Activated CD4-positive, alpha-beta memory T cell treated with anti-CD3 and anti-CD28 coated beads for 36 hours (primary cell): ENCODE measurements at regions of chr1 and their contacts with region 1.

Region 1: DNA sequence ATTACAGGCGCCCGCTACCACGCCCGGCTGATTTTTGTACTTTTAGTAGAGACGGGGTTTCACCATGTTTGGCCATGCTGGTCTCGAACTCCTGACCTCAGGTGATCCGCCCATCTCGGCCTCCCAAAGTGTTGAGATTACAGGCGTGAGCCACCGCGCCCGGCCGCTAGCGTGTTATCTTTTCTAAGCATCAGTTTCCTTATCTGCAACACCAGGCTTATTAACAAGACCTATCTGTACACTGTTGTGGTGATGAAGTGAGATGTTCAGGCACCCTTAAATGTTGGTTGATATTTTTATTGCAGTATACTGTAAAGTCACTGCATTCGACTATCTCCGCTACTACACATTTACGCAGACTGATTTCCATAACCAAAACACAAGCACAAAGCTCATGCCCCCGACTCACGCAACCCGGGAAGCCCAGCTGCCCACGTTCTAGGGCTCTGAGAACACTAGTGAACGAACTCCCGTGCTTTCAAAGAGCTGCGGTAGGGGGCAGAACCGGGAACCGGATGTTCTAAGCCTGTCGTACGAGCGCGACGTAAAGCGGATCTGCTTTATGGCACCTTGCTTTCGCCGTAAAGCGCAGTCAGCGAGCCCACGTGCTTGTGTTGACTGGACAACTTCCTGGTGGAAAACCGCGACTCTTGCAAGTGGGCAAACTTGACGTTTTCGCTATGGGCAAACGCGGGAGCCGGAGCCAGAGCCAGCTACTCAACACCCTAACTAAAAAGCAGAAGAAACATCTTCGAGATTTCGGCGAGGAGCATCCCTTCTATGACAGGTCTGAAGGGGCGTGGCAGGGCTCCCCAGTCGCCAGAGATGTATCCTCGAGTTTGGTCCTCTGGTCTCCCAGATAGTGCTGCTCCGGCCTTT is at the start of gene UTP25:
- DNase-seq: peak; percentile 97
- H3K4me3 Mint-ChIP-seq: peak within 1 kb of the TSS; percentile 93
- H3K27ac Mint-ChIP-seq: peak within 1 kb of the TSS; percentile 88
- H3K4me1 Mint-ChIP-seq: peaks cover 42% of the 10 kb centered on the region
- H3K27me3 Mint-ChIP-seq: peaks cover 4% of the 10 kb centered on the region
- total RNA-seq, gene UTP25: 6.6 to 7.1 TPM

Region 2: DNA sequence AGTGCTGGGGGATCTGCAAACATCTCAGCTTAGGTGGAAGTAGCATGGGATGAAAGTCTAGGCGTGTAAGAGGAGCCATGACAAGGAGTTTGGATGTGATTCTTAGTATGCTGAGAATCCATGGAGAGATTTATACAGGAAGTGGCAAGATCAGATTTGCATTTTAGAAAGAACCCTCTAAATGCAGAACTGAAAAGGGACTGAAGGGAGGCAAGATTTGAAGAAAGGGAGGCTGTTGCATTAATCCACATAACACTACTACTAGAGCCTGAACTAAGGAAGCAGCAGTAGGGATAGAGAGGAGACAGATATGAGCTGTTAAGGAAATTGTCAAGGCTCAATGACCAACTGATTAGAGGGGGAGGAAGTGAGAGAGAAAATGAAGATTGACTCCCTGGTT is 53.0 kb before region 1 on chr1:
- CTCF ChIA-PET with region 1: interaction called, 32 read pairs
- POLR2A ChIA-PET with region 1: interaction called, 4 read pairs
- intact Hi-C with region 1: no loop called
- DNase-seq: no peak
- H3K4me3 Mint-ChIP-seq: no peak overlapping the region
- H3K27ac Mint-ChIP-seq: peak overlapping the region; percentile 81
- H3K4me1 Mint-ChIP-seq: peaks cover 35% of the 10 kb centered on the region
- H3K27me3 Mint-ChIP-seq: no peaks in the 10 kb centered on the region

Region 3: DNA sequence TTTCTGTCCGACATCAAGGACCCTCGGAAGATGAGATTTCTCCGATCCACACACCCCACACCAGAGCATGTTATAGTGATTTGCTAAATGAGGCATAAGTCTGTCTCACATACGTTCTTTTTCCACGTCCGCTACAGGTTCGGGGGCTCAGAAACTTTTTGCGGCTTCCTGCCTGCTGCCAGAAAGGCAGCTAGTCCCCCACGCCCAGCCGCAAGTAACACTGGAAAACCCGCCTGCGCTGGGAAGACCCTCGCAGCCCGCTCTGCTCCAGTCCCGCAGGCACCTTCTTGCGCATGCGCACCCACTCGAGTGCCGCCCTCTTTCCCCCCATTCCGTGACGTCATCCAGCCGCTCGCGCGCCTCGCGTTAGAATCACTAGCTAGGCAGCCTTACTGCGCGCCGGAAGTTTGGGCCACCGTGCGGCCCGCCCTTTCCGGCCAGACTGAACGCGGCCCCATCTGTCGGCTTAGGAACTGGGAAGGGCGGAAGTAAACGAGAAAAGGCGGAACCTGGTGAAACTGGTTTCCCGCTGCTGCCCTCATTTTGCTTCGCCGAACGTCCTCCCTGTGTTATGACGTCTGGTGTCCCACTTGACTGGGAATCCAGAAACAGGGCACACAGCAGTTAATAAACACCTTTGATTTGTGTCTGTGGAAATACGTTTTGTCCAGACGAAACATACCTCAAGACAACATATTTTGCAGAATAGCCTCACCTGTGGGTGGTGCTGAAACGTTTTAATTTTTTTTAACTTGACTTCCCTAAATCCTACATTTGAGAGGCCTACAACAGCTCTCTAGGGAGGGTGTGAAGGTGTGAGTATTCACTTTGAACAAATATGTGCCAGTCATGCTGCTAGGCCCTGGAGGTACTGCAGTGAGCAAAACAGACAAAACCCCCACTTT is 43.1 kb before region 1 on chr1 and contains the start of gene C1orf74:
- CTCF ChIA-PET with region 1: interaction called, 51 read pairs
- POLR2A ChIA-PET with region 1: interaction called, 3 read pairs
- intact Hi-C with region 1: loop called (anchors 1 kb)
- DNase-seq: peak; percentile 100
- H3K4me3 Mint-ChIP-seq: peak within 1 kb of the TSS; percentile 93
- H3K27ac Mint-ChIP-seq: peak within 1 kb of the TSS; percentile 93
- H3K4me1 Mint-ChIP-seq: peaks cover 39% of the 10 kb centered on the region
- H3K27me3 Mint-ChIP-seq: peaks cover 3% of the 10 kb centered on the region
- total RNA-seq, gene C1orf74: 3.5 to 3.9 TPM

Region 4: GRCh38 chr1:209805875-209806760 is 21.5 kb before region 1 on chr1 and contains the start of gene IRF6:
- CTCF ChIA-PET with region 1: interaction called, 52 read pairs
- POLR2A ChIA-PET with region 1: interaction called, 3 read pairs
- intact Hi-C with region 1: no loop called
- DNase-seq: peak; percentile 73
- H3K4me3 Mint-ChIP-seq: peak within 1 kb of the TSS; percentile 75
- H3K27ac Mint-ChIP-seq: peak within 1 kb of the TSS; percentile 55
- H3K4me1 Mint-ChIP-seq: peaks cover 9% of the 10 kb centered on the region
- H3K27me3 Mint-ChIP-seq: peaks cover 5% of the 10 kb centered on the region
- total RNA-seq, gene IRF6: 0.07 to 0.31 TPM

Region 5: DNA sequence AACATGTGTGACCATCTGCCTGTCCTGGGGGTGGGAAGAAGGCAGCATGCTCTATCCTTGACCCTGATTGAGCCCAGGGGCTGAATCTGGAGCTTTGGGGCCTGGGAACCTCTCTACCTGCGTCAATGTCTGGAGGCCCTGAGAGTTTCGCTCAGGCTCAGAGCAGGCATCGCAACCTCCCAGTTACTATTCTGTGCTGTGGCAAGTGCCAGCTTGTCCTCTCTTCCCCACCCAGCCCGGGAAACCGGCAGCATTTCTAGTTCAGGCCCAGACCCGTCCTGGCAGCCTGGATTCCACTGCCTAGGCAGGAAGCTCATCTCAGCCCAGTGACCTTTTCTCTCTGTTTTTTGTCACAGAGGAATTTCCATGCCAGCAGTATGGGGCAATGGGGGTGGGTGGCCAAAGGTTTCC is 11.7 kb before region 1 on chr1:
- CTCF ChIA-PET with region 1: interaction called, 52 read pairs
- POLR2A ChIA-PET with region 1: interaction called, 3 read pairs
- intact Hi-C with region 1: no loop called
- DNase-seq: no peak
- H3K4me3 Mint-ChIP-seq: no peak overlapping the region
- H3K27ac Mint-ChIP-seq: peak overlapping the region; percentile 44
- H3K4me1 Mint-ChIP-seq: peaks cover 8% of the 10 kb centered on the region
- H3K27me3 Mint-ChIP-seq: peaks cover 5% of the 10 kb centered on the region

Region 6: GRCh38 chr1:209839875-209840491 is 12.4 kb after region 1 on chr1:
- CTCF ChIA-PET with region 1: interaction called, 19 read pairs
- POLR2A ChIA-PET with region 1: interaction called, 9 read pairs
- intact Hi-C with region 1: no loop called
- DNase-seq: peak; percentile 20
- H3K4me3 Mint-ChIP-seq: no peak overlapping the region
- H3K27ac Mint-ChIP-seq: peak overlapping the region; percentile 1
- H3K4me1 Mint-ChIP-seq: peaks cover 35% of the 10 kb centered on the region
- H3K27me3 Mint-ChIP-seq: no peaks in the 10 kb centered on the region